Ascending aorta (tissue), 2 donors: ENCODE measurements at regions of chr19 and their contacts with region 1.

Region 1: GRCh38 chr19:52734893-52735661 is at the start of gene ZNF611:
- DNase-seq: peak; percentile 86 to 99
- H3K4me3 ChIP-seq: peak within 1 kb of the TSS; percentile 81 to 82
- H3K27ac ChIP-seq: peak within 1 kb of the TSS; percentile 78 to 88
- H3K4me1 ChIP-seq: peaks cover 0 to 5% of the 10 kb centered on the region in 2 donors
- H3K27me3 ChIP-seq: no peaks in the 10 kb centered on the region
- CTCF ChIP-seq: peak; percentile 68 to 79 (median 74)
- total RNA-seq, gene ZNF611: 13.1 TPM

Region 2: DNA sequence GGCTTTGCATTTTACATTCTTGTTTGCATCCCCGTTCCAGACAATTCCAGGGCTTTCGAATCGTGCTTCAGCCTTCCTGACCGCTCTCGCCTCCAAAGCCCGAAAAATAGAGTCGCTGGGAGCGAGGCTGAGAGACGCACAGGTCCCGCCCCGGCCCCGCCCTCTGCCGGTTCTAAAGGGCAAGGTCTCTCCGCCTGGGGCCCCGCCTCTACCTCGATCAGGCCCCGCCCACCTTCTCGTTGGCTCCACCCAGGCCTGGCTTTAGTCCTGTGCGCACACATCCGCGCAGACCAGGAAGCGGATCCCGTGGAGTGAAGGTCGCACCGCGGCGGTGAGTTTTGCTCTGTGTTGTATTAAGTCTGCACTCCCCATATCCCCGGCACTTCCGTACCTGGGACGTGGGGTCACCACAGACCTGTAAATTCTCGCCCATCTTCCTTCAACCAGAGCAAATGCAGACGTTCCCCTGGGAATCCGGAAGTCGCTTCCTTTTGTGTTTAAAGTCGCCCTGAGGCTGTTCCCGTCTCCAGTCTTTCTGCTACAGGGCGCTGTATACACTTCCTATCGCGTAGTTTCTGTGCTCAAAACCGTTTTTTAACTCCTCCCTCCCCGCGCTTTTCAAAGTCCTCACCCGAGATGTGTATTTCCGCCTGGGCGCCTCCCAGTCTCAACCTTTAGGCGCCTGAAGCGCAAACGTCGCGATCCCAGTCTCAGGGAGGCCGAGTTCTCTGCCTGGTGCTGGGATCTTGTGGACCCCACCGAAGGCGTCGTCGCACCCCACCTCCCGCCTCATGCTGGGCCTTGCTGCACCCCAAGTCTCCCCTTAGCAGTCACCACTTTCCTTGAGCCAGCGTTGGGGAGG is 164.8 kb before region 1 on chr19 and contains the start of gene ZNF701:
- intact Hi-C with region 1: loop called (anchors 2 kb)
- DNase-seq: peak; percentile 81 to 98
- H3K4me3 ChIP-seq: peak within 1 kb of the TSS; percentile 80 to 82
- H3K27ac ChIP-seq: peak within 1 kb of the TSS; percentile 75 to 86
- H3K4me1 ChIP-seq: peaks cover 0 to 5% of the 10 kb centered on the region in 2 donors
- H3K27me3 ChIP-seq: no peaks in the 10 kb centered on the region
- CTCF ChIP-seq: peak in 2 of 3 experiments; percentile 26 to 48
- total RNA-seq, gene ZNF701: 13.2 TPM

Region 3: DNA sequence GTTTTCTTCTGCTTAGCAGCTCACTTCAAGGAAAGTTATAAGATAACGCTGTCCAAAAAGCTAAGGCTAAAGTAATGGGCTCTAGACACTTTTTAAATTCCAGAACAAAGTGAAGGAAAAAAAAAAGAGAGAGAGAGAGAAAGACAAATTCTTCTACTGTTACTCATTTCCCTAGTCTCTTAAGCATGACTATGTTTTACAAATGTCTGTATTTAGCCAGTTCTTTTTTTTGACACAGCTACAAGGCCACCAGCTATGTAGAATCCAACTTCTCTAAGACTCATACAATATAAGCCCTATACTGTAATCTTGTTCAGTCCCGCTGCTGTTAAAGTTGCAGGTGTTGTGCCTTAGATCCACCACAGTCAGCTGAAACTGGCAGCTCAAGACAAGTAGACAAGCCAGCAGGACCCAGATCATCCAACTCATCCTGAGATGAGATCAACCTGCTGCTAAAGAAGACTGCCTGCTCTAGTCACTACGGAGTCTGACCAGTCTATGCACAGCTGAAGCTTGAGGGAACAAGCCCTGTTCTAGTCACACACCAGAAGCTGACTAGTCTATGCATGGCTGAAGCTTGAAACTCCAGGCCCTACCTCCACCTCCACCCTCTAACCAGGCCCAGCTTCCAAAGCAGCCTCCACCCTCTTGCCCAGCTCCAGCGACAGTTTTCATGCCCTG is 86.6 kb before region 1 on chr19:
- intact Hi-C with region 1: no loop called
- DNase-seq: no peak
- H3K4me3 ChIP-seq: peak overlapping the region in 1 of 2 donors; percentile 33
- H3K27ac ChIP-seq: peak overlapping the region; percentile 77 to 89
- H3K4me1 ChIP-seq: peaks cover 18 to 19% of the 10 kb centered on the region in 2 donors
- H3K27me3 ChIP-seq: no peaks in the 10 kb centered on the region
- CTCF ChIP-seq: no peak

Region 4: GRCh38 chr19:52690369-52691214 is 44.5 kb before region 1 on chr19:
- intact Hi-C with region 1: loop called (anchors 1 kb)
- DNase-seq: peak; percentile 89 to 98
- H3K4me3 ChIP-seq: peak overlapping the region; percentile 56 to 89
- H3K27ac ChIP-seq: peak overlapping the region; percentile 95 to 98
- H3K4me1 ChIP-seq: peaks cover 3 to 28% of the 10 kb centered on the region in 2 donors
- H3K27me3 ChIP-seq: no peaks in the 10 kb centered on the region
- CTCF ChIP-seq: peak in 2 of 3 experiments; percentile 16 to 19

Region 5: GRCh38 chr19:52897144-52897935 is 162.3 kb after region 1 on chr19 and contains the start of gene ZNF320:
- intact Hi-C with region 1: loop called (anchors 5 kb)
- DNase-seq: peak; percentile 92 to 98
- H3K4me3 ChIP-seq: peak within 1 kb of the TSS; percentile 77 to 93
- H3K27ac ChIP-seq: peak within 1 kb of the TSS; percentile 92 to 94
- H3K4me1 ChIP-seq: peaks cover 5 to 10% of the 10 kb centered on the region in 2 donors
- H3K27me3 ChIP-seq: no peaks in the 10 kb centered on the region
- CTCF ChIP-seq: no peak
- total RNA-seq, gene ZNF320: not detected

Region 6: DNA sequence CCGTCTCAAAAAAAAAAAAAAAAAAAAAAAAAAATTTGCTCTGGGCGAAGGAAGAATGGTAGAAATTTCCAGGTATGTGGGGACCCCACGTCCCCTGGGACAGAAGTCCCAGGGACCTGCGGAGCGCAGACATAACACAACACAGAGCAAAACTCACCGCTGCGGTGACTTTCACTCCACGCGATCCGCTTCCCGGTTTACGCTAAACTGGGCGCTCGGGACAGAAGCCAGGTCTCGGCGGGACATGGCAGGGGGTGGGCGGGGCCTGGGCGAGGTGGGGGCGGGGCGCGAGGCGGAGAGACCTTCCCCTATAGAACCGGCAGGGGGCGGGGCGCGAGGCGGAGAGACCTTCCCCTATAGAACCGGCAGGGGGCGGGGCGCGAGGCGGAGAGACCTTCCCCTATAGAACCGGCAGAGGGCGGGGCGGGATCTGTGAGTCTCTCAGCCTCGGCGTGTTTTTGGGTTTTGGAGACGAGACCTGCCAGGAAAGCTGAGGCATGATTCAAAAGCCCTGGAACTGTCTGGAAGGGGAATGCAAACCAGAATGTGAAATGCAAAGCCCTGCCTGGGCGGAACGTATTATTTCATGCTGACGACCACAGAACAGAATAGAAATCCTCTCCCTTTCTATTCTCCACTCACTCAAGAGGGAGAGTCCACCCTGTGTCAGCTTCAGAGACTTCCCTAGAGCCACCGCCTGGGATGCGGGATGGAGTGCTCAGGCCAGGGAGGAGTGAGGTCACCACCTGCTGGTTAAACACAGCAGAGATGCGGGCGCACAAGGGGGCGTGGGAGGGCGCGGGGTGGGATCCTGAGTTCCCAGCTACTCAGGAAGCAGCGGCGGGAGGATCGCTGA is 258.5 kb after region 1 on chr19:
- intact Hi-C with region 1: loop called (anchors 5 kb)
- DNase-seq: peak; percentile 51 to 91
- H3K4me3 ChIP-seq: peak overlapping the region; percentile 61 to 71
- H3K27ac ChIP-seq: peak overlapping the region; percentile 79 to 81
- H3K4me1 ChIP-seq: peaks cover 8 to 10% of the 10 kb centered on the region in 2 donors
- H3K27me3 ChIP-seq: no peaks in the 10 kb centered on the region
- CTCF ChIP-seq: peak; percentile 38 to 77 (median 61)